ENCODE measurements at regions of chr7 and their contacts with region 1.

Region 1: DNA sequence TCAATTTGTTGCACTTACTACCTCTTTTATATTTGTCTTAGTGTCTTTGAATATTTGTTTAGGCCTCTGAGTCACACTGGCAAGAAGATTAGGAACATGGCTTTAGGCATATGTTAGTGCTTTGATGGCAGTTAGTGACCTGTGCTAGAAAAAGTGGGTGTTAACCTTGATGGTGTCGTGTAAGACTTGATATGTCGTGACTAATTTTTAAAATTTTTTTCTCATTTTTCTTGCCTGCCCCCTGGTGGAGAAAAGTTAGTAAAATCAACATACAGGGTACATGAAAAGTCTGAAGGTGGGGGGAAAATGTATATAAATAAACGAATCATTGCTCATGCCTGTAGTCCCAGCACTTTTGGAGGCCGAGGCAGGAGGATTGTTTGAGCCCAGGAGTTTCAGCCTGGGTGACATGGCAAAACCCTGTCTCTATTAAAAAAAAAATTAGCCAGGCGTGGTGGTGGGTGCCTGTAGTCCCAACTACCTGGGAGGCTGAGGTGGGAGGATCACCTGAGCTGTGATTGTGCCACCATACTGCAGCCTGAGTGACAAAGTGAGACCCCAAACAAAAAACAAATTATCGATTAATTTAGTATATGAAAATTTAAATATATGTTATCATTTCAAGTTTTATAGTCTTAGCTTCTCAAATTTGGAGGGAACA is 44.6 kb downstream of the TAX1BP1 start:
- DNase-seq: peak; percentile 28
- CTCF ChIP-seq: no peak

Region 2: GRCh38 chr7:27210441-27211083 is 574.0 kb before region 1 on chr7:
- in situ Hi-C with region 1: loop called (anchors 25 kb)
- DNase-seq: peak; percentile 79
- CTCF ChIP-seq: peak; percentile 75